ENCODE measurements at regions of chr9 and their contacts with region 1.

Region 1: GRCh38 chr9:137672907-137673791 is 54.3 kb downstream of the EHMT1 start:
- DNase-seq: no peak
- ATAC-seq: peak; percentile 91
- H3K4me3 Mint-ChIP-seq: peak overlapping the region; percentile 65
- H3K27ac Mint-ChIP-seq: peak overlapping the region; percentile 82
- H3K4me1 Mint-ChIP-seq: peaks cover 72% of the 10 kb centered on the region
- H3K27me3 Mint-ChIP-seq: no peaks in the 10 kb centered on the region
- CTCF ChIP-seq: peak; percentile 87

Region 2: DNA sequence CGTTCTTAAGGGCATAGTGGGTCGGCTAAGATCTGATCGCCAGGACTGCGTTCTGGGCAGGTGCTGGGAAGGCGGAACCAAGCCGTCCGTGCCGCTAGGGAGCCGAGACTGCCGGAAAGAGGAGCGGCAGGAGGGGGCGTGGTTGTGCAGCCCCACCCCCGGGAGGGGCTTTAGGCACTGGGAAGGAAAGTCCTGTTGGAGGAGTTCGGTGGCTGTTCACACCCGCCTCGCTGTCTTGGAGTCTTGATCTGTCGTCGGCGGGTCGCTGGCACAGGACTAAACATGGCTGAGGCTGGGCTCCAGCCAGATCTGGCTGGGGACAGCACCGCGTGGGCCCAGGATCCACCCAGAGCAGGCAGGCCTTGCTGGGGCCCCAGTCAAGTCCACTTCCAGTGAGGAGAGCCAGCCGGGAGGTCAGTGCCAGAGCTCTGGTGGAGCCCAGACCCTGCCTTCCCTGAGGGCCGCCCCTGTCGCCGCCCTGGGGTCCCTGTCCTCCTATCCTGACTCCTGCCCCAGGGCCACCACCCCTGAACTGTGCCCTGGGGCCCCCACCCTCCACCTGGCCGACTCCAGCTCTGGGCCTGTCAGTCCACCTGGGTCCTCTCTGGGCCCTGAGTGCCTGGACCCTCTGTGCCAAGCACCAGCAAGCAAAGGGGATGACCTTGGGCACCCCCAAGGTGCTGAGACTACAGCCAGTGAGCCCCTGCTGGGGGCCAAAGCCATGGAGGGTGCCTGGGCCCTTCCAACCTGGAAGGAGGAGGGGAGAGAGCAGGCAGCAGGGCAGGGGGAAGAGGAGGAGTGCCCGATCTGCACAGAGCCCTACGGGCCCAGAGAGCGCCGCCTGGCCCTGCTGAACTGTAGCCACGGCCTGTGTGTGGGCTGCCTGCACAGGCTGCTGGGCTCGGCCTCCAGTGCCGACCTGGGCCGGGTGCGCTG is 455.6 kb before region 1 on chr9:
- CTCF ChIA-PET with region 1: no interaction called
- POLR2A ChIA-PET with region 1: no interaction called
- intact Hi-C with region 1: no loop called
- DNase-seq: no peak
- ATAC-seq: no peak
- H3K4me3 Mint-ChIP-seq: no peak overlapping the region
- H3K27ac Mint-ChIP-seq: no peak overlapping the region
- H3K4me1 Mint-ChIP-seq: peaks cover 2% of the 10 kb centered on the region
- H3K27me3 Mint-ChIP-seq: no peaks in the 10 kb centered on the region
- CTCF ChIP-seq: no peak

Region 3: GRCh38 chr9:137705443-137706293 is 32.5 kb after region 1 on chr9:
- CTCF ChIA-PET with region 1: no interaction called
- POLR2A ChIA-PET with region 1: no interaction called
- intact Hi-C with region 1: loop called (anchors 5 kb)
- DNase-seq: peak; percentile 36
- ATAC-seq: peak; percentile 73
- H3K4me3 Mint-ChIP-seq: peak overlapping the region; percentile 67
- H3K27ac Mint-ChIP-seq: peak overlapping the region; percentile 86
- H3K4me1 Mint-ChIP-seq: peaks cover 72% of the 10 kb centered on the region
- H3K27me3 Mint-ChIP-seq: no peaks in the 10 kb centered on the region
- CTCF ChIP-seq: no peak

Region 4: DNA sequence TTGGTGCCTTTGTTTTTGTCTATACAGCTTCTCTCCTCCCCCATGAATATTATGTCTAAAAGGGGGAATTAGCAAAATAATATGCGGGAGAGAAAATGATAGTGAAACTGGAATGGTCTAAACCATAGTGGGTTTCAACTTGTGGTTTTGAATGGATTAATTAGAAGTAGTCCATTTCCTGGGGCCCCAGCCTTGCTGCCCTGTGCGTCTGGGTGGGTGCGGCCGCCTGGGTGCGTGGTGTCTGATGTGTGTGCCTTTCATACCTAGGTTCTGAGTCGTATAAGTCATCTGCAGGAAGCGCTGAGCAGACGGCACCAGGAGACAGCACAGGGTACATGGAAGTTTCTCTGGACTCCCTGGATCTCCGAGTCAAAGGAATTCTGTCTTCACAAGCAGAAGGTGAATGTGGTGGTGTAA is 84.5 kb after region 1 on chr9:
- CTCF ChIA-PET with region 1: interaction called, 12 read pairs
- POLR2A ChIA-PET with region 1: interaction called, 4 read pairs
- intact Hi-C with region 1: no loop called
- DNase-seq: peak; percentile 46
- ATAC-seq: peak; percentile 30
- H3K4me3 Mint-ChIP-seq: peak overlapping the region; percentile 64
- H3K27ac Mint-ChIP-seq: peak overlapping the region; percentile 99
- H3K4me1 Mint-ChIP-seq: peaks cover 65% of the 10 kb centered on the region
- H3K27me3 Mint-ChIP-seq: no peaks in the 10 kb centered on the region
- CTCF ChIP-seq: no peak

Region 5: DNA sequence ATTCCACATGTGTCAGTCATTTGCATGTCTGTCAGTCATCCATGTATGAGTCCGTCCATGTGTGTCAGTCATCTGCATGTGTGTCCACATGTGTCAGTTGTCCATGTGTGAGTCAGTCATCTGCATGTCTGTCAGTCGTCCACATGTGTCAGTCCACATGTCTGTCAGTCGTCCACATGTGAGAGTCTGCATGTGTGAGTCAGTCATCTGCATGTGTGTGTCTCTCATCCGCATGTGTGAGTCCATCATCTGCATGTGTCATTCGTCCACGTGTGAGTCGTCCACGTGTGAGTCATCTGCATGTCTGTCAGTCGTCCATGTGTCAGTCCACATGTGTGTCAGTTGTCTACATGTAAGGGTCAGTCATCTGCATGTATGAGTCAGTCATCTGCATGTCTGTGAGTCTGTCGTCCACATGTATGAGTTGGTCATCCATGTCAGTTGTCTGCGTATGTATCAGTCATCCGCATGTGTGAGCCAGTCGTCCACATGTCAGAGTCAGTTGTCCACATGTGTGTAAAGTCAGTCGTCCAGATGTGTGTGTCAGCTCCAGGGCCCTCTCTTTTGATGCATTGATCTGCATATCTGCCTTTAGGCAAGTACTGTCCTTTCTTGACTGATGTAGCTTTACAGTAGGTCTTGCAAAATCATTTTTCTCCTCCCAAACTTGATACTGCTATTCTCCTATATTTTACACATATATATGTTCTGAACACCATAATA is 131.9 kb after region 1 on chr9:
- CTCF ChIA-PET with region 1: interaction called, 3 read pairs
- POLR2A ChIA-PET with region 1: no interaction called
- intact Hi-C with region 1: loop called (anchors 10 kb)
- DNase-seq: no peak
- ATAC-seq: no peak
- H3K4me3 Mint-ChIP-seq: no peak overlapping the region
- H3K27ac Mint-ChIP-seq: peak overlapping the region; percentile 30
- H3K4me1 Mint-ChIP-seq: peaks cover 25% of the 10 kb centered on the region
- H3K27me3 Mint-ChIP-seq: no peaks in the 10 kb centered on the region
- CTCF ChIP-seq: no peak